Vagina (tissue), 2 donors: ENCODE measurements at regions of chr7 and their contacts with region 1.

Region 1: DNA sequence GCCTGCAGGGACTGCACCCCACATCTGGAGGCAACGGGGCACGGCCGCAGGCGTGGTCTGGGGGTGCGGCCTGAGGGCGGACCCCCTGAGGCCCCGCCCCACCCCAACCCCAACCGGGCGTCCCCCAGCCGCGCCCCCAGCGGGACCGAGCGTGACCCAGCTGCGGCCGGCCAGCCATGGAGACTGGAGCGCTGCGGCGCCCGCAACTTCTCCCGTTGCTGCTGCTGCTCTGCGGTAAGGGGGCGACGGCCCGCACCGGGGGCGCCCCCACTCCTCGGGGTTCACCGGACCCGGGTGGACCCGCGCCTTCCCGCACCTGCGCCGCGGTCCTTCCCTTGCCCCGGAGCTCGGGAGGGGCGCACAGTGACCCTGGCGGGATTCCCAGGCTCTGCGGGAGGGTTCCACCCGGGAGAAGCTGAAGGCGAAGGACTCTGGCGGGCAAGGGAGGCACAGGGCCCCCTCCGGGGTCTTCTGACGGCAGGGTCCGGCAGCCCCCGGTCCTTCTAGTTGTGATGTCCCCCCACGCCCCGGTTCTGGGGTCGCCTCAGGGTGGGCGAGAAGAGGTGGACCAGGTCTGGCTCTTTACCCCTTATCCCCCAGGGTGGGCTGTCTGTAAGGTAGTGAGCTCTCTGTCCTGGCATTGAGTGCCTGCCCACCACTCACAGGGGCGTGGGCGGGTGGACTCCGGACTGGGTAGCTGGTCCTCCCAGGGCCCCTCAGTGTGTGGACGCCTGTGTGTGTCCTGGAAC is at the start of gene RAMP3:
- DNase-seq: no peak
- H3K4me3 ChIP-seq: peak within 1 kb of the TSS; percentile 42 to 43
- H3K27ac ChIP-seq: peak within 1 kb of the TSS; percentile 57
- H3K4me1 ChIP-seq: peaks cover 9% of the 10 kb centered on the region
- H3K27me3 ChIP-seq: peaks cover 9% of the 10 kb centered on the region
- CTCF ChIP-seq: no peak
- POLR2A ChIP-seq: no peak
- total RNA-seq, gene RAMP3: 50.1 TPM

Region 2: DNA sequence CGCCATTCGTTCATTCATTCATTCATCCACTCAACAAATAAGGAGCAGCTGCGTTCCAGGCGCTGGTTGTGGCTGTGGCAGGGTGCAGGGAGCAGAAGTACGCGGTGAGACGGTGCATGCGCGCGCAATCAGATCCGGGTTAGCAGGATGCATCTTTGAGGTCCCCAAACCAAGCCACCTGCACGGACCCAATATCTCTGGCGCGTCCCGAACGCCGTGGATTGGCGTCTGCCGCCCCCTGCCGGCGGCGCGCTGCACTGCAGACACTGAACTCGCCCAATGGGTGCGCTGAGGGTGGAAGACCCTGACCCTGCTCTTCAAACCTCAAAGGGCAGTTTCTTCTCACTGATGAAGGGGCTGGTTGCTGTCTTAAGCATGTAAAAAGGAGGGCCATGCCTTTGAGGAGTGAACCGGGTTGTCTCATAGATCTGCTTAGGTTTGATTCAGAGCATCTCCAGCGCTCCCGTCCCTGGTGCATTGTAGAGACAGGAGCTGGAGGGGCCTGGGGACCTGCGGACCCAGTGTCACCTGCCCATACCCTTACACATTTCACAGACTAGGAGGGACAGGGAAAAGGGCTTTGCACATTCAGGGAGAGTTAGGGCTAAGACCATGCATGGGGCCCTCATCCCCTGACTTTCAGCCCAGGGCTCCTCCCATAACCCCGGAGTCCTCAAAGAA is 102.3 kb after region 1 on chr7:
- intact Hi-C with region 1: loop called (anchors 2 kb)
- DNase-seq: no peak
- H3K4me3 ChIP-seq: no peak overlapping the region
- H3K27ac ChIP-seq: no peak overlapping the region
- H3K4me1 ChIP-seq: no peaks in the 10 kb centered on the region
- H3K27me3 ChIP-seq: no peaks in the 10 kb centered on the region
- CTCF ChIP-seq: peak; percentile 95 to 96 (median 96)
- POLR2A ChIP-seq: no peak

Region 3: GRCh38 chr7:45863715-45864114 is 705.9 kb after region 1 on chr7:
- intact Hi-C with region 1: loop called (anchors 10 kb)
- DNase-seq: no peak
- H3K4me3 ChIP-seq: no peak overlapping the region
- H3K27ac ChIP-seq: no peak overlapping the region
- H3K4me1 ChIP-seq: no peaks in the 10 kb centered on the region
- H3K27me3 ChIP-seq: no peaks in the 10 kb centered on the region
- CTCF ChIP-seq: no peak
- POLR2A ChIP-seq: no peak